ENCODE measurements at regions of chr14 and their contacts with region 1.

Region 1: DNA sequence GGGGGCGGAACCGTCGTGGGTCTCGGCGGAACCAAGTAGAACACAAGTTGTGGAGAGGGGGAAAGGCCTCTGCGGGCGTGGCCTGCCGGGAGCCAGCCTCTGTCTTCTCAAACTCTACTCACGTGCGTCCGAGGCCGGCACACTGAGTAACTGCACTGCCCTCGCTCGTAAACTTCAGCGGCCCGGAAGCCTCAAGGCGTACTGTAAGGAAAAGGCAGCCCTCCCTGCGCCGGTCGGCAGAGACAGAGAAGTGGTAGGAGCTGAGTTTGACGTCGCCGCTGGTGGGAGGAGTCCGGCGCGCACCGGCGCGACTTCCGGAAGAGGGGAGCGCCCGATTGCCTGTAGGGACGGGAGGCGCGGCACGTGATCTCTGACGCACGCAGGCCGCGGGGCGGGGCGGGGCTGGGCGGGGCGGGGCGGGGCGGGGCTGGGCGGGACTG is at the start of gene FBXO33:
- DNase-seq: peak; percentile 96 to 97
- H3K4me3 ChIP-seq: peak within 1 kb of the TSS; percentile 85 to 97
- H3K27ac ChIP-seq: peak within 1 kb of the TSS; percentile 98
- H3K4me1 ChIP-seq: no peaks in the 10 kb centered on the region
- H3K27me3 ChIP-seq: no peaks in the 10 kb centered on the region
- CTCF ChIP-seq: peak in 1 of 4 experiments; percentile 45
- POLR2A ChIP-seq: no peak
- total RNA-seq, gene FBXO33: 12.1 to 27.2 (median 20.8) TPM

Region 2: DNA sequence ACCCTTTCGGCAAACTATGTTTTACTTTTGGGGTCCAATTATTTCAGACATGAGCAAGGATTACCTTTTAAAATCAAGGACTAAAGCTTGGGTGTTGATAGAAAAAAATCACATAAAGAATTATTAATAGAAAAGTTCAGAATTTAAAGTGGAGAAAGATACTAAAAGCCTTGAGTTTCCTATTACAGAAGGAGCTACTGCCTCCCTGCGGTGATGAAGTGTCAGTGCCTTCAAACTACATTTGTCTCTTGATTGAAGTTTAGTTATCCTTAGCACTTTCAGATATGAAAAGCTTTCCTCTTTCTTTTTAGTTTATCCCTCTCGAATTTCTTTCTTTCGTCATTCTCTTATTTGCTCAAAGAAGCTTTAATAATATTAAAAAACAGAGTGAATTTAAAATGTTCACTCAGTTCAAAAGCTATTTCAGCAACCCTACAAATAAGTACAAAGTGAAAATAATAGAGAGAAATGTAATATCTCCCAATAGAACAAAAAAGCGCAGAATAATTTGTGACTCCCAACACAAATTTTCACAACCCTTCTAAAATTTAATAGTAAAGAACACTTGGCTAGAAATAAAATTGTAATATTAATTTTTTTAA is 416.7 kb before region 1 on chr14:
- intact Hi-C with region 1: no loop called
- DNase-seq: no peak
- H3K4me3 ChIP-seq: no peak overlapping the region
- H3K27ac ChIP-seq: no peak overlapping the region
- H3K4me1 ChIP-seq: no peaks in the 10 kb centered on the region
- H3K27me3 ChIP-seq: no peaks in the 10 kb centered on the region
- CTCF ChIP-seq: peak; percentile 46 to 63 (median 56)
- POLR2A ChIP-seq: no peak

Region 3: GRCh38 chr14:39102969-39103957 is 328.9 kb before region 1 on chr14 and contains the start of gene SEC23A:
- intact Hi-C with region 1: loop called (anchors 10 kb)
- DNase-seq: peak; percentile 88 to 90
- H3K4me3 ChIP-seq: peak within 1 kb of the TSS; percentile 86 to 87
- H3K27ac ChIP-seq: peak within 1 kb of the TSS; percentile 96 to 98
- H3K4me1 ChIP-seq: peaks cover 0 to 8% of the 10 kb centered on the region in 2 donors
- H3K27me3 ChIP-seq: no peaks in the 10 kb centered on the region
- CTCF ChIP-seq: no peak
- POLR2A ChIP-seq: peak; percentile 76 to 87
- total RNA-seq, gene SEC23A: 133 to 322 (median 231) TPM

Region 4: DNA sequence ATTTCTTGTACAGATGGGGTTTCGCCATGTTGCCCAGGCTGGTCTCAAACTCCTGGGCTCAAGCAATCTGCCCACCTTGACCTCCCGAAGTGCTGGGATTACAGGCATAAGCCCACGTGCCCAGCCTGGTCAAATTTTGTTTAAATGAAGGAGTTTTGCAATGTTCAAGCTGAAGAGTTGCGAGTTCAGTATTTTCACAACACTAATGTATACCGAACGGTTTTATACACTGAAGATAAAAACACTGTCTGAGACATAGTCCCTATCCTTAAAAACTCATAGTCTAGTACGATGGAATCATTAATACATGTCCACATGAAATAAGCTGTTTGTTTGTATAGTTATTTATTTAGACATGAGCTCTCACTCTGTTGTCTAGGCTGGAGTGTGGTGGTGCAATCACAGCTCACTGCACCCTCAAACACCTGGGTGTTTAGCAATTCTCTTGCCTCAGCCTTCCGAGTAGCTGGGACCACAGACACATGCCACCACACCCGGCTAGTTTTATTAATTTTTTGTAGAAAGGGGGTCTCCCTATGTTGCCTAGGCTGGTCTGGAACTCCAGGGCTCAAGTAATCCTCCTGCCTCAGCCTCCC is 277.5 kb before region 1 on chr14:
- intact Hi-C with region 1: no loop called
- DNase-seq: no peak
- H3K4me3 ChIP-seq: no peak overlapping the region
- H3K27ac ChIP-seq: no peak overlapping the region
- H3K4me1 ChIP-seq: no peaks in the 10 kb centered on the region
- H3K27me3 ChIP-seq: no peaks in the 10 kb centered on the region
- CTCF ChIP-seq: no peak
- POLR2A ChIP-seq: no peak

Measured in uterus (tissue), 4 donors.